ENCODE measurements at regions of chr6 and their contacts with region 1.

Region 1: GRCh38 chr6:142112451-142113061 is 20.2 kb upstream of the GJE1 start:
- DNase-seq: peak; percentile 48
- H3K4me3 ChIP-seq: no peak overlapping the region
- H3K27ac ChIP-seq: no peak overlapping the region
- H3K4me1 ChIP-seq: no peaks in the 10 kb centered on the region
- H3K27me3 ChIP-seq: no peaks in the 10 kb centered on the region
- CTCF ChIP-seq: peak; percentile 81 to 82

Region 2: GRCh38 chr6:141598487-141598886 is 514.1 kb before region 1 on chr6:
- CTCF ChIA-PET with region 1: no interaction called
- dilution Hi-C with region 1: no loop called
- in situ Hi-C with region 1: no loop called
- intact Hi-C with region 1: loop called (anchors 10 kb)
- DNase-seq: peak; percentile 13
- H3K4me3 ChIP-seq: no peak overlapping the region
- H3K27ac ChIP-seq: no peak overlapping the region
- H3K4me1 ChIP-seq: no peaks in the 10 kb centered on the region
- H3K27me3 ChIP-seq: no peaks in the 10 kb centered on the region
- CTCF ChIP-seq: no peak

Region 3: DNA sequence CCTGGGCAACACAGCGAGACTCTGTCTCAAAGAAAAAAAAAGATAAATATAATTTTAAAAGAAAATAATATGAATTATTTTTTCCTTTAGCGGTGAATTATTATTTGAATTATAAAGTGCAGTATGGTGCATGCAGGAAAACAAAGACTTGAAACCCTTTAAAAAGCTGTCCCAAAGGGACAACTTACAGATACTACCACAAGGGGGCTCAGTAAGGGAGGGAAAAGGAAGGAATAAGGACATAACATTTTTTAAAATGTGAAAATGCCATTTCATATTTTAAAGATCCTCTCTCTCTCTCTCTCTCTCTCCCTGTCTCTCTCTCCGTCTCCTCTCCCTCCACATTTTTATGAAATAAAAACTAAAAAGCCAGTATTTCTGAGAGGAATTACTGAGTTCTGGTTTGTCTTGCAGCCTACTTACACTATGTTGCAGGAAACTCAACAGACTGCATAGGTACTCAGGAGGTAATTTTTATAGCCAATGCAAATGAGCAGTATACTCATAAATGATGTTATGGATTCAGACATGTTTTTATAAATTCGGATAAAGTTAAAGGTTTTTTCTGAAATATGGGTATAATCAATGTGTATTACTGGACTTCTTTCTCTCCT is 434.9 kb before region 1 on chr6:
- CTCF ChIA-PET with region 1: no interaction called
- dilution Hi-C with region 1: no loop called
- in situ Hi-C with region 1: loop called (anchors 10 to 25 kb)
- intact Hi-C with region 1: loop called (anchors 1 kb)
- DNase-seq: peak; percentile 13
- H3K4me3 ChIP-seq: no peak overlapping the region
- H3K27ac ChIP-seq: no peak overlapping the region
- H3K4me1 ChIP-seq: no peaks in the 10 kb centered on the region
- H3K27me3 ChIP-seq: peaks cover 2% of the 10 kb centered on the region
- CTCF ChIP-seq: peak; percentile 58 to 73

Region 4: GRCh38 chr6:141688916-141689315 is 423.6 kb before region 1 on chr6:
- CTCF ChIA-PET with region 1: no interaction called
- dilution Hi-C with region 1: no loop called
- in situ Hi-C with region 1: loop called (anchors 10 to 25 kb)
- intact Hi-C with region 1: no loop called
- DNase-seq: no peak
- H3K4me3 ChIP-seq: no peak overlapping the region
- H3K27ac ChIP-seq: no peak overlapping the region
- H3K4me1 ChIP-seq: no peaks in the 10 kb centered on the region
- H3K27me3 ChIP-seq: no peaks in the 10 kb centered on the region
- CTCF ChIP-seq: no peak

Region 5: GRCh38 chr6:142045380-142046278 is 66.9 kb before region 1 on chr6:
- CTCF ChIA-PET with region 1: no interaction called
- dilution Hi-C with region 1: no loop called
- in situ Hi-C with region 1: no loop called
- intact Hi-C with region 1: loop called (anchors 5 kb)
- DNase-seq: no peak
- H3K4me3 ChIP-seq: no peak overlapping the region
- H3K27ac ChIP-seq: no peak overlapping the region
- H3K4me1 ChIP-seq: peaks cover 3% of the 10 kb centered on the region
- H3K27me3 ChIP-seq: no peaks in the 10 kb centered on the region
- CTCF ChIP-seq: peak; percentile 26 to 38

Region 6: GRCh38 chr6:142334294-142334693 is 221.7 kb after region 1 on chr6:
- CTCF ChIA-PET with region 1: no interaction called
- dilution Hi-C with region 1: no loop called
- in situ Hi-C with region 1: no loop called
- intact Hi-C with region 1: no loop called
- DNase-seq: no peak
- H3K4me3 ChIP-seq: no peak overlapping the region
- H3K27ac ChIP-seq: no peak overlapping the region
- H3K4me1 ChIP-seq: peaks cover 25% of the 10 kb centered on the region
- H3K27me3 ChIP-seq: no peaks in the 10 kb centered on the region
- CTCF ChIP-seq: no peak

Region 7: GRCh38 chr6:142374965-142375733 is 262.6 kb after region 1 on chr6:
- CTCF ChIA-PET with region 1: no interaction called
- dilution Hi-C with region 1: no loop called
- in situ Hi-C with region 1: no loop called
- intact Hi-C with region 1: no loop called
- DNase-seq: peak; percentile 74
- H3K4me3 ChIP-seq: no peak overlapping the region
- H3K27ac ChIP-seq: peak overlapping the region; percentile 62
- H3K4me1 ChIP-seq: peaks cover 68% of the 10 kb centered on the region
- H3K27me3 ChIP-seq: no peaks in the 10 kb centered on the region
- CTCF ChIP-seq: no peak

Region 8: DNA sequence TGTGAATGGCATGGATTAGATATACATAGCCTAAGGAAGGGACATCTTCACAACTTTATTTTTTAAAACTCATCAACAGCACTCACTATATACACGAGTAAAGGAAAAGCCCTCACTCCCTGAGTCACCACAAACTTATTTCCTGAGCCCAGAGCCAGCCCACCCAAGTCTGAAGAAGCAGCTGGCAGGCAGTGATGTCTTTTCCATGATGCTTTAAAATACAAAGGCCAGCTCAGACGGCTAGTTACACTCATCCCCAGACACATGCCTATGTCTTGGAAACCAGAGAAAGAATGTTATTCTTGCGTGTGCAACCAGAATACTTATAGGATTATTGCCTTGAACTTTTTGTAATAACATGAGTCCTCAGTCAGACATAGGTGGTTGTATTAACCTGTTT is 303.6 kb after region 1 on chr6:
- CTCF ChIA-PET with region 1: no interaction called
- dilution Hi-C with region 1: no loop called
- in situ Hi-C with region 1: no loop called
- intact Hi-C with region 1: no loop called
- DNase-seq: peak; percentile 80
- H3K4me3 ChIP-seq: no peak overlapping the region
- H3K27ac ChIP-seq: peak overlapping the region; percentile 32
- H3K4me1 ChIP-seq: peaks cover 39% of the 10 kb centered on the region
- H3K27me3 ChIP-seq: no peaks in the 10 kb centered on the region
- CTCF ChIP-seq: no peak